Panc1 (cell line): ENCODE measurements at regions of chr1 and their contacts with region 1.

Region 1: DNA sequence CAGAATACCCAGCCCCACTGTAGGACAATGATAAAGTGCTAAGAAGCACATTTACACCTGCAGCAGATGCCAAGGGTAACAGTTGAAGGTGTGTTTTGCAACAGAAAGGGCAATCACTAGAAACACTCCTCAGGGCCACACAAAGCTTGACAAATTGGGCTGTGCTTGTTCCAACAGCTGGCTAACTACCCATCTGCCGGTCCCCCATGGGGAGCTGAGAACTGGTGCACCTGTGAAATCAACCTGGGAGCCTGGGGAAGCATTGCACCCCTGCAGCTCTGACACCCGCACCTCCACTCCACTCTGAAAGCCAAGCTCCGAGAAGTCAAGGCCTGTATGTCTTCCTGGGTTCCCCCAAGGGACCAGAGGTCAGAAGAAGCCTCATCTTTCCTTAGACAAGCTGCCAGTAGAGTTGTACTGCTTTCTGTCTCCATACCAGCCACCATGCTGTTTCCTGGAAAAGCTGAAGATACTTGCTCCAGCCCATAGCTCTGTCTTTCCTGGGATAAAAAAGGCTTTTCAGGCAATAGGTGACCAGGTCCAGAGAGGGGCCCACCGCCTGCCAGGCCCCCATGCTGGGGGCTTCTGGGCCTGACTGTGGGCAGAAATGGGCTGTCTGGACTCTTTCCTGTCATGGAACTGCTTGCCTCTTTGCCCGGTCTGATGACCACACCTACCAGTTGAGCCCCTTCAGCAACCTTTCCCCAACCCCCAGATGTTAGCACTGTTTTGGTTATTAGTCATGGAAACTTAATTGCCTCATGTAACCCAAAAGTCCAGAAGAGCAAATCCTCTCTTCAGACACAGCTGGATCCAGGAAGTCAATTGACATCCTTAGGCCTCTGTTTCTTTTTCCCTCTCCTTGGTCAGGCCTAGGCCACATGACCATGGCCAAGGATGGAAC is 93.6 kb downstream of the KIF14 start:
- DNase-seq: no peak
- ATAC-seq: no peak
- H3K4me3 ChIP-seq: no peak overlapping the region
- H3K27ac ChIP-seq: no peak overlapping the region
- H3K4me1 ChIP-seq: no peaks in the 10 kb centered on the region
- H3K27me3 ChIP-seq: no peaks in the 10 kb centered on the region
- CTCF ChIP-seq: no peak

Region 2: GRCh38 chr1:199313434-199313833 is 1213.5 kb before region 1 on chr1:
- CTCF ChIA-PET with region 1: interaction called, 13 read pairs
- POLR2A ChIA-PET with region 1: no interaction called
- in situ Hi-C with region 1: no loop called
- intact Hi-C with region 1: no loop called
- DNase-seq: no peak
- ATAC-seq: no peak
- H3K4me3 ChIP-seq: no peak overlapping the region
- H3K27ac ChIP-seq: no peak overlapping the region
- H3K4me1 ChIP-seq: no peaks in the 10 kb centered on the region
- H3K27me3 ChIP-seq: no peaks in the 10 kb centered on the region
- CTCF ChIP-seq: no peak; the same call in 1 of the 2 replicates

Region 3: DNA sequence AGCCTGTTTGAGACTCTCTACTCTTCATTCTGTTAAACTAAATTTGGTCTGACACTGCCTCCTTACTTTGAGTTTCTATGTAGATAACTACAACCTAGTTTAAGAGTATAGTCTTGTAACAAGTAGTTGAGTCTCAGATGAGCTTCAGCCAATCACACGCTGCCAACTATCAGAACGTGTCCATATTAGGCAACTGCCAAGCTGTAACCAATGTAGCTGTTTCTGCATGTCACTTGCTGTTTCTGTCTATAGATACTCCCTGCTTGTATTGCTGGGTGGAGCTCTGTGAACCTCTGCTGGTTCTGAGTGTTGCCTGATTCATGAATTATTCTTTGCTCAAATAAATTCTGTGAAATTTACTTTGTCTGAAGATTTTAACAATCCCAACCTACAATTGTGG is 952.0 kb before region 1 on chr1:
- CTCF ChIA-PET with region 1: interaction called, 10 read pairs
- POLR2A ChIA-PET with region 1: no interaction called
- in situ Hi-C with region 1: no loop called
- intact Hi-C with region 1: no loop called
- DNase-seq: no peak
- ATAC-seq: no peak
- H3K4me3 ChIP-seq: no peak overlapping the region
- H3K27ac ChIP-seq: no peak overlapping the region
- H3K4me1 ChIP-seq: no peaks in the 10 kb centered on the region
- H3K27me3 ChIP-seq: no peaks in the 10 kb centered on the region
- CTCF ChIP-seq: no peak